ENCODE measurements at regions of chr6 and their contacts with region 1.

Region 1: DNA sequence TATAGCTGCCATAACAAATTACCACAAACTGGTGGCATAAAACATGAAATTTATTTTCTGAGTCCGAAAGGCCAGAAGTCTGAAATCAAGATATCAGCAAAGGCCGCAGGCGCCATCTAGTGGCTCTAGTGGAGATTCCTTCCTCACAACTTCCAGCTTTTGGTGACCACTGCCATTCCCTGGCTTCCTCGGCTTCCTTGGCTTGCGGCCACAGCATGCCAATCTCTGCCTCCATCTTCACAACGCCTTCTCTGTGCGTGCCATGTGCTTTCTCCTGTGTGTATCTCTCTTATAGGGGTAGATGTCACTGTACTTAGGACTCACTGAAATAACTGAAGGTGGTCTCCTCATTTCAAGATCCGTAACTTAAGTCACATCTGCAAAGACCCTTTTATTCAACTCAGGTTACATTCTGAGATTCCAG is 5.4 kb upstream of the PLAGL1 start:
- DNase-seq: peak; percentile 64 to 85 (median 82)
- H3K4me3 ChIP-seq: no peak overlapping the region
- H3K27ac ChIP-seq: no peak overlapping the region
- H3K4me1 ChIP-seq: no peaks in the 10 kb centered on the region
- H3K27me3 ChIP-seq: no peaks in the 10 kb centered on the region
- CTCF ChIP-seq: peak; percentile 73 to 81 (median 80)
- EP300 ChIP-seq: no peak
- POLR2A ChIP-seq: no peak

Region 2: DNA sequence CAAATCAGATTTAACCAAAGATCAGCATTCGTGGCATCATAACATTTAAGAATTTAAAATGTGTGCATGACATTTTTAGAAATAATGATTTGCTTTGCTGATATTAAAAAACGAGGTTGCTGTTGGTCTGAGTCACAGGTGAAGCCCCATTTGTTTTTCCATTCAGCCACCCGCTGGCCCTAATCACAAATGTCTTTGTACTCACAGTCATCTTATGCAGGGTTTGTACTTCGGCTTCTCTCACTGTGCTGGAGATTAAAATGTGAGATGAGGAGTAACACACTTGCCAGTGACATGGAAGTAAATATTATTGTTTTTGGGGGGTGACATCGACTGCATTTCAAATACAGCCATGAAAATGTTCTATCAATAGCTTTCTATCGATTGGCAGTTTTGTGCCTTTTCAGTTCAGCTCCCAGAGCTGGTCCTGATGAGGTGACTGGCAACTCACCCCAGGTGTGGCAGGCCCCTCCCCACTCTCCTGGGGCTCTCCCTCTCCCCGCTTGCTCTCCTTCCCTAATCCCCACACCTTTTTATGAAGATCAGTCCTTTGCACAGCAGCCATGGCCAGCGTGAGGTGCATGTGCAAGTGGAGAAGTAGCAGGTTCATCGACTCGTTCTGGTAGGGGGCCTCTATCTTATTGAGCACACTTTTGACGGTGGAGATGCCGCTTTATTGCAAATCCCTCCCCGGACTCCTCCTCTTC is 443.2 kb before region 1 on chr6:
- intact Hi-C with region 1: loop called (anchors 2 to 5 kb)
- DNase-seq: no peak
- H3K4me3 ChIP-seq: no peak overlapping the region
- H3K27ac ChIP-seq: no peak overlapping the region
- H3K4me1 ChIP-seq: no peaks in the 10 kb centered on the region
- H3K27me3 ChIP-seq: no peaks in the 10 kb centered on the region
- CTCF ChIP-seq: no peak
- EP300 ChIP-seq: no peak
- POLR2A ChIP-seq: no peak

Region 3: DNA sequence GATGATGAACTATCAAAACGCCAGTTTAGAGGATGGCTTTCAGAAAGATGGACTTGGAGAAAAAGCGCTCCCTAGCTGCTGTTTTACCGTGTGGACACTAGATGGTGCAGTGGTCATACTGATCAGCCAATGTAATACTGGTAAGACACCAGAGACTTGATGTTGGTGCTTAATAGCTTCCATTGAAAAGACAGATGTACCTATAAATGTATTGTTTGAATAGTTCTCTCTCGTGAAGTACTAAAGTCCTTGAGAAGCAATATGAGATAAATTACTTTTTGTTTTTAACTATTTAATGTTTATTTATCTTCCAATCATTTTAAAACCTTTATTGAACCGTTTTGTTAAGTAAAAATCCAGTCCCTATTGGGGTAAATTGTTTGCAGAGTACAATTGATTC is 438.1 kb before region 1 on chr6:
- intact Hi-C with region 1: loop called (anchors 2 to 5 kb)
- DNase-seq: peak in 4 of 5 donors; percentile 18 to 62 (median 25)
- H3K4me3 ChIP-seq: no peak overlapping the region
- H3K27ac ChIP-seq: no peak overlapping the region
- H3K4me1 ChIP-seq: no peaks in the 10 kb centered on the region
- H3K27me3 ChIP-seq: no peaks in the 10 kb centered on the region
- CTCF ChIP-seq: peak; percentile 51 to 92 (median 90)
- EP300 ChIP-seq: no peak
- POLR2A ChIP-seq: no peak

Measured in ovary (tissue), 10 donors.